Naive thymus-derived CD8-positive, alpha-beta T cell (primary cell): ENCODE measurements at regions of chr1 and their contacts with region 1.

Region 1: DNA sequence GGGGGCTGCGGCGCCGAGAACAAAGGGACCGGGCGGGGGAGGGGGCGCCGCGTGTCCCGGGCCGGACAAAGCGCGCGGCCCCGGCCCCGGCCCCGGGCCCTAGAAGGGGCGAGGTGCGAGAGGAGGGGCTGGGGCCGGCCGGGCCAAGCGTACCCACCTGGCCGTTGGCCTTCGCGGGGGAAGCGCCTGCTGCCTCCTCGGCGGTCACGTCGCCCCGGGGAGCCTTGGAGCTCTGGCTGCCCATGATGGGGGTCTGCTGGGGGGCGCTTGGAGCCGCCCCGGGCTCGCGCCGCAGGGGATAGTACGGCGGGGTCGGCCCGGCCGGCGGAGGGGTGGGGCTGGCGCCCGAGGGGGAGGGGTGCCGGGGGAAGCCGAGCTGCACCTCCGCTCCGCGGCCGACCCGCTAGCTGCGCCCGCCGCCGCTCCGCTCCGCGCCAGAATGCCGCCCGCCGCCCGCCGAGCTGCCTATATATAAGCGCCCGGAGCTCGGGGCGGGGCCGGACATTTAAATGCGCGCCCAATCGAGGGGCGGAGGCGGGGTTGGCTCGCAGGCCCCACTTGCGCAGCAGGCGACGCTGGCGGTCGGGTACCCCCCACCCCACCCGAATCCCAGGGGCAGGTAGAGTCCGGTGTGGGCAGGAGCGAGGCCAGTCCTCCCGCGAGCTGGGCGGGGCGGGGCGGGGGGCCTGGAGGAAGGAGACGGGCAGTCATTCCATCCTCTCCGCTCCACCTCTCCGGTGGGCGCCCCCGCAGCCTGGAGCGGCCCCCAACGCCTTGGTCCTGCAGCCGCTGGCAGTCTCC is at the start of gene MARCKSL1:
- DNase-seq: peak; percentile 79 to 93 (median 88)
- ATAC-seq: peak; percentile 62 to 66
- H3K4me3 Mint-ChIP-seq: peak within 1 kb of the TSS; percentile 80 to 93 (median 87)
- H3K27ac Mint-ChIP-seq: peak within 1 kb of the TSS; percentile 69 to 91 (median 88)
- H3K4me1 Mint-ChIP-seq: peaks cover 30 to 53% (median 36%) of the 10 kb centered on the region in 4 donors
- H3K27me3 Mint-ChIP-seq: no peaks in the 10 kb centered on the region
- polyA plus RNA-seq, gene MARCKSL1: 37.8 to 81.4 (median 72.7) TPM

Region 2: DNA sequence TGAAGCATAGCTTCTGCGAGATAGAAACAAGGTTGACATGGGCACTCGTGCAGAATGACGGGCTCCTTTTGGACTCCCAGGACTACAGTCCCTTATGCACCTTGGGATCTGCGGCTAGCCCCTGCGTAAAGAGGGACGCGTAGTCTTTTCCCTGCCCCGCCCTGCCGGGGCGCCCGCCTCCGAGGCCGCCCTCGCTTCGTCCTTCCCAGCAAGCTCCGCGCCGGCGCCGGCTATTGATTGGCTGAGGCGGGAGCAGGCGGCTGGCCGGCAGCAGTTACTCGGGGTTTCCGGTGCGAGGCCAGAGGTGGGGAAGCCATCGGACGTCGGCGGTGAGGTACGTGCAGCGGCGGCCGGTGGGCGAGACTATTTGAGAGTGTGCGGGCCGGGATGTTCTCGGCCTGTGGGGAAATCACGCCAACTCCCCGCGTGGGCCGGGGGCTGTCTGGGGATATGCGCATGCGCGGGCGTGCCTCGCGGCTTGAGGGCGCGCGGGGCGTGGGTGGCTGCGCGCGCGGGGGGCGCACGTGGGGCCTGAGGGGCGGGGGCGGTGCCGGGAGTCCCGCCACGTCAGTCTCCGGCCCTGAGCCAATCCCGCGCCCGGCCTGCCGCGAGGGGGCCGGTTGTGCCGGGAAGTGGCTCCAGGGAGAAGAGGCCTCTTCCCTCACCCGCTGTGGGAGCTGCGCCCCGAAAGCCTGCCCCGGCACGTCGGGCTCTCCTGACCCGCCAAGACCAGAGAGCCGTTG is 156.4 kb before region 1 on chr1 and contains the start of gene TXLNA:
- POLR2A ChIA-PET with region 1: interaction called, 11 read pairs
- DNase-seq: peak; percentile 76 to 93 (median 88)
- ATAC-seq: peak; percentile 87 to 88
- H3K4me3 Mint-ChIP-seq: peak within 1 kb of the TSS; percentile 86 to 95 (median 91)
- H3K27ac Mint-ChIP-seq: peak within 1 kb of the TSS; percentile 85 to 98 (median 95)
- H3K4me1 Mint-ChIP-seq: peaks cover 27 to 49% (median 42%) of the 10 kb centered on the region in 4 donors
- H3K27me3 Mint-ChIP-seq: no peaks in the 10 kb centered on the region
- polyA plus RNA-seq, gene TXLNA: 19.0 to 28.3 (median 24.4) TPM

Region 3: DNA sequence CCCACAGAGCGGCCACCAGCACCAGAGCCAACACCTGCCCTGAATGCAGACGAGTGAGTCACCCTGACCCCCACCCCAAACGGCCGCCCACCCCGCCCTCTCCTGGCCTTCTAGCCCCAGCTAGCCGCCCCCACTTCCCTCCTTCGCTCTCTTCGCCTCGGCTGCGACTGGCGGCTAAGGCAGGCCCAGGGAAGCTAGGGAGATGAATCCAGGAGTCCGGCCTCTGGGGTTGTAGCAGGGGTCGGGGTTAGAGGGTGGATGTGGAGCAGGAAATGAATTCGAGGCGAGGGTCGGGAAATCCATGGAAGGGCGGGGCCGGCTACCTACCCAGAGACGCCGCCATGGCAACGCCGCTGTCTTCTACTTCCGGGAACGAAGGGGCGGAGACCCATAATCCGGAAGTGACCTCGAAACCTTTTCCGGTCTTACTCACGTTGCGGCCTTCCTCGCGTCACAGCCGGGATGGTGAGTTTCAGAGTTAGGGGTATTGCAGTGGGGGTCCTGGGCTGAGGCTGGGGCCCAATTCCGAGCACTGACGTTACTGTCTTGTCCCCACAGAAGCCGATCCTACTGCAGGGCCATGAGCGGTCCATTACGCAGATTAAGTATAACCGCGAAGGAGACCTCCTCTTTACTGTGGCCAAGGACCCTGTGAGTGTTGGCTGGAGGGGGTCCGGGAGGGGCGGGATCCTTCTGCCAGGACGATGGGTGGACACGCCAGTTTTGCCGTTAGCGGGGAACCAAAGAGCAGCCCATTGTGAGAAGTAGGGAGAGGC is 113.8 kb before region 1 on chr1 and contains the starts of genes EIF3I and TMEM234:
- POLR2A ChIA-PET with region 1: interaction called, 17 read pairs
- DNase-seq: peak; percentile 75 to 95 (median 90)
- ATAC-seq: peak; percentile 89 to 95
- H3K4me3 Mint-ChIP-seq: peak within 1 kb of the TSS; percentile 90 to 99 (median 96)
- H3K27ac Mint-ChIP-seq: peak within 1 kb of the TSS; percentile 95 to 100 (median 99)
- H3K4me1 Mint-ChIP-seq: peaks cover 14 to 53% (median 41%) of the 10 kb centered on the region in 4 donors
- H3K27me3 Mint-ChIP-seq: no peaks in the 10 kb centered on the region
- polyA plus RNA-seq, gene EIF3I: 167 to 181 (median 179) TPM
- polyA plus RNA-seq, gene TMEM234: 2.1 to 4.9 (median 4.4) TPM

Region 4: DNA sequence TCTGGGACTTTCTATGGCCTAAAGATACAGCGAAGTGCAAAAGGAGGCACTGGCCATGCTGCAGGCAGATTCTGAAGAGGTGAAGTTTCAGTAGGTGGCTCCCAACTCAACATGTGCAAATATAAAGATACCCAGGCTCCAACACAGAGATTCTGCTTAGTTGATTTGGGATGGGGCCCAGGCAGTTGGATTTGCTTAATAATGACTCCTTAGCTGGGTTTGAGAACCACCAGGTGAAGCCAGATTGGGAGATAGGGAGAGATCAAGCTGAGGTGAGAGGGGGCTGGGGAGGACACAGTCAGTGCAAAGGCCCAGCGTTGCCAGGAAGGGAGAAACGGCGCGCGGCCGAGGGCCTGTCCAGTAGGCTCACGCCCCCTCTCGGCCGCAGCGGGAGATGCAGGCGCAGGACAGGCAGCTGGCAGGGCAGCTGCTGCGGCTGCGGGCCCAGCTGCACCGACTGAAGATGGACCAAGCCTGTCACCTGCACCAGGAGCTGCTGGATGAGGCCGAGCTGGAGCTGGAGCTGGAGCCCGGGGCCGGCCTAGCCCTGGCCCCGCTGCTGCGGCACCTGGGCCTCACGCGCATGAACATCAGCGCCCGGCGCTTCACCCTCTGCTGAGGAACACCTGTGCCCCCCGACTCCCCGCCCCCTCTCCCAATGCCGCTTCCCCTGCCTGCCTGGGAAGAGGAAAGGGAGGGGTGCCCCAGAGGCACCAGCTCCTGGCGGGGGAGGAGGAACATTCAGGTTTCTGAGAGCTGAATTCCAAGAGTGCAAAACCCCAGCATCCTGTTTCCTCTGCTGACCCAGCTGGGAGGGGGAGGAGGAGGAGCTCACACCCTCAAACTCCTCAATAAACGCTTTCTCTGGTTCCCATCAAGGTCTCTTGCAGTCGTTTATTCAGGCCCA is 87.8 kb before region 1 on chr1:
- POLR2A ChIA-PET with region 1: interaction called, 106 read pairs
- DNase-seq: peak; percentile 45 to 82 (median 62)
- ATAC-seq: peak in 1 of 2 donors; percentile 3
- H3K4me3 Mint-ChIP-seq: peak overlapping the region; percentile 63 to 100 (median 84)
- H3K27ac Mint-ChIP-seq: peak overlapping the region; percentile 94 to 99 (median 98)
- H3K4me1 Mint-ChIP-seq: peaks cover 29 to 72% (median 52%) of the 10 kb centered on the region in 4 donors
- H3K27me3 Mint-ChIP-seq: peaks cover 0 to 1% (median 0%) of the 10 kb centered on the region in 5 donors

Region 5: GRCh38 chr1:32291708-32292492 is 44.1 kb before region 1 on chr1 and contains the start of gene HDAC1:
- POLR2A ChIA-PET with region 1: interaction called, 27 read pairs
- DNase-seq: peak; percentile 92 to 98 (median 96)
- ATAC-seq: peak; percentile 95
- H3K4me3 Mint-ChIP-seq: peak within 1 kb of the TSS; percentile 93 to 100 (median 99)
- H3K27ac Mint-ChIP-seq: peak within 1 kb of the TSS; percentile 95 to 99 (median 96)
- H3K4me1 Mint-ChIP-seq: peaks cover 24 to 61% (median 51%) of the 10 kb centered on the region in 4 donors
- H3K27me3 Mint-ChIP-seq: no peaks in the 10 kb centered on the region
- polyA plus RNA-seq, gene HDAC1: 171 to 202 (median 173) TPM

Region 6: GRCh38 chr1:32351399-32352238 is 15.6 kb after region 1 on chr1:
- POLR2A ChIA-PET with region 1: interaction called, 147 read pairs
- DNase-seq: peak; percentile 87 to 96 (median 90)
- ATAC-seq: peak; percentile 90 to 93
- H3K4me3 Mint-ChIP-seq: peak overlapping the region; percentile 74 to 91 (median 84)
- H3K27ac Mint-ChIP-seq: peak overlapping the region; percentile 53 to 93 (median 89)
- H3K4me1 Mint-ChIP-seq: peaks cover 25 to 62% (median 50%) of the 10 kb centered on the region in 4 donors
- H3K27me3 Mint-ChIP-seq: no peaks in the 10 kb centered on the region

Region 7: DNA sequence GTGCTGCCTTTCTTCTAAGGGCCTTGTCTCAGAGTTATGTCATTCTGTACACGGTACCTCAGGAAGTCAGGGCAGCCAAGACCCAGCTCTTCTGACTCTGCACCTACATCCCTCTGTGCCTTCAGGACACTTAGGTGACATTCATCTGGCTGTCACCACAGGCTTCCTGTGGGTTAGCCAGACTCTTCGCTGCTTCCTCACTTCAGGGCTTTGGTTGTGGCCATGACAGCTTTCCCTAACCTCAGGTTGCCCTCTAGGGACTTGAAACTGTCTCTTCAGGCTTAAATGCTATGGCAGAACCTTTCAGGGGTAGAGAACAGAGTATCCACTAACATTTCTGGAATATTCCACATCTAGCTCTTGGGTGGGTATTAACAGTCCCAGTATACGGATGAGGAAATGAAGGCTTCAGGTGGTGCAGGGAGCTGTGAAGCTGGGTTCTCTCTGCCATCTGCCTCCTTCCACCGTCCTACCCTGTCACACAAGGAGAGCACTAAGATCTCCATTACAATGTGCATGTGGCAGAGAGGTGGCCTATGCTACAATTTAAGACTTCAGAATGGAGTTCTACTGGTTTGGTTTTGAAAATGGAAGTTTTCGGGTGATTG is 36.3 kb after region 1 on chr1:
- POLR2A ChIA-PET with region 1: interaction called, 17 read pairs
- DNase-seq: peak; percentile 18 to 79 (median 62)
- ATAC-seq: peak; percentile 91 to 92
- H3K4me3 Mint-ChIP-seq: peak overlapping the region in 4 of 10 donors; percentile 5 to 43 (median 20)
- H3K27ac Mint-ChIP-seq: peak overlapping the region in 7 of 10 donors; percentile 48 to 82 (median 64)
- H3K4me1 Mint-ChIP-seq: peaks cover 11 to 28% (median 20%) of the 10 kb centered on the region in 4 donors
- H3K27me3 Mint-ChIP-seq: no peaks in the 10 kb centered on the region

Region 8: GRCh38 chr1:32580348-32581017 is 244.5 kb after region 1 on chr1:
- POLR2A ChIA-PET with region 1: no interaction called
- DNase-seq: no peak
- ATAC-seq: no peak
- H3K4me3 Mint-ChIP-seq: no peak overlapping the region
- H3K27ac Mint-ChIP-seq: no peak overlapping the region
- H3K4me1 Mint-ChIP-seq: no peaks in the 10 kb centered on the region
- H3K27me3 Mint-ChIP-seq: no peaks in the 10 kb centered on the region